ENCODE measurements at regions of chr4 and their contacts with region 1.

Region 1: DNA sequence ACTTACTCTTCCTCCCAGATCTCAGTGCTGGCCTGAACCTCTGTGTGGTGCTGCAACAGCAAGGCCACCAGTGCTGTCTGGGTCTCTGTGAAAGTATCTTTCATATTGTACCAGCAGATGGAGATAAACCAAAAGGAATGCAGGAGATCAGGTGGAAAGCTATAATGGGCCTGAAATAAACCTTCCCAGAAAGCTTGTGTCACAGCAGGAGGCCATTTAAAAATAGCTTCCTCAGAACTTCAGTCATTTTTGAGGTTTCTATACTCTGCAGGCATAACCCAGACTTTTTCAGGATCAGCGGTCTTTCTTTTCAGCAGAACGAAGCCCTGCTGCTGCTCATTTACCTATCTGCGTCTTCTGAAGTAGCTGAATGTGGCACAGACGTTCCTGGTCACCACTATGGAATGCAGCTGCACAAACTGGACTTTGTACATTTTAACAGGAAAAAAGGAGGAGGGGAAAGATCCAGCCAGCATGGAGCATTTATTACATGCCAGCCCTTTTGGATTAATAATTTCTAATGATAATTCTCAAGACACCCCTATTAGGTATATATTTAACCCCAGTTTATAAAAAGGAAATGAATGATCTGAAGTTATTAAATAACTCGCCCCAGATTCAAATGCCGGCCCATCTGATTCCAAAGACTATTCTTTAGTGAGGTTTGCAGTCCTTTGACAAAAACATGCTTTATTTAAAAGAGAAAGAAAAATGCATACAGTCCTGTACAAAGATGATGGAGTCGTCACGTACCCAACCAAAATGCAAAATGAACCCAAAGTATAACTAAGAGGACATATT is 119.7 kb downstream of the NFKB1 start:
- DNase-seq: peak; percentile 43 to 68
- H3K4me3 ChIP-seq: peak overlapping the region; percentile 25; the same call in 1 of the 2 replicates
- H3K27ac ChIP-seq: peak overlapping the region; percentile 12
- H3K4me1 ChIP-seq: peaks cover 12% of the 10 kb centered on the region
- H3K27me3 ChIP-seq: no peaks in the 10 kb centered on the region
- CTCF ChIP-seq: peak; percentile 72

Region 2: GRCh38 chr4:102439236-102439614 is 181.7 kb before region 1 on chr4:
- CTCF ChIA-PET with region 1: no interaction called
- POLR2A ChIA-PET with region 1: no interaction called
- intact Hi-C with region 1: loop called (anchors 10 kb)
- DNase-seq: peak; percentile 3 to 51
- H3K4me3 ChIP-seq: no peak overlapping the region
- H3K27ac ChIP-seq: peak overlapping the region; percentile 26; the same call in 1 of the 2 replicates
- H3K4me1 ChIP-seq: peaks cover 18% of the 10 kb centered on the region
- H3K27me3 ChIP-seq: no peaks in the 10 kb centered on the region
- CTCF ChIP-seq: no peak

Region 3: DNA sequence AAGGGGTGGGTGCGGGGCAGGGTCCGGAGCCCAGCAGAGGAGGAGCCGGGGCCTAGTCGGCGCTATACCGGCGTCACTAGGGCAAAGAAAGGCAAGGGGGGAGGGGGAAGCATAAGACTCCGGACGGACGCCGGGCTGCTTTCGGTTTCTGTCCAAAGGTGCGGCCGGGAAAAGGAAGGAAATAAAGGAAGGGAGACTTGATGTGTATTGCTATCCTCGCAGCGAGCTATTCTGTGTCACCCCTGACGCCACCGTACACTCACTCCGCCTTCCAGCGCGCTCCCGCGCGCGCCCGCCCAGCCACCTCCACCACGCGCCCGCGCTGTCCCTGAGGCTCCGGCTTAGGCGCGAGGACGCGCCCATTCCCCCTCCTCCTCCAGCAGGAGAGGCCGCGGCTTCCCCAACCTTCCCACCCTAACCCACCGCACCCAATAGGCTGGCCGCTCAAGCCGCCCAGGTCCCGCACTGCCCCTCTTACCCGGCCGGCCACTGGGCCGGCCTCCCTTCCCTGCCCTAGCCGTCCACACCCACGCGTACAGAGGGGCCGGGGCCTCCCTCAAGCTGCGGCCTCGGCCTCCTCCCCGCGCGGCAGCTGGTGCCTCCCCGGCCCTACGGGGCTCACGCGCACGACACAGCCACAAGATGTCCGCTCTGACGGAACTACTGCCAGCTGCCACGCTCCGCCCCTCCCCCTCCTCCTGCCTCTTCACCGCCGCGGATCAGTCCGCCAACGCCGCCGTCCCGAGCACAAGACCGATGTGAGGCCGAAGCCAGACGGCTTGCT is 206.2 kb after region 1 on chr4 and contains the start of gene UBE2D3:
- CTCF ChIA-PET with region 1: interaction called, 4 read pairs
- POLR2A ChIA-PET with region 1: no interaction called
- intact Hi-C with region 1: loop called (anchors 5 kb)
- DNase-seq: peak; percentile 75 to 85
- H3K4me3 ChIP-seq: peak within 1 kb of the TSS; percentile 95
- H3K27ac ChIP-seq: peak within 1 kb of the TSS; percentile 99
- H3K4me1 ChIP-seq: peaks cover 38% of the 10 kb centered on the region
- H3K27me3 ChIP-seq: no peaks in the 10 kb centered on the region
- CTCF ChIP-seq: no peak
- total RNA-seq, gene UBE2D3: 154 and 183 TPM in 2 replicates

Region 4: GRCh38 chr4:103008875-103009729 is 388.2 kb after region 1 on chr4:
- CTCF ChIA-PET with region 1: no interaction called
- POLR2A ChIA-PET with region 1: no interaction called
- intact Hi-C with region 1: loop called (anchors 1 kb)
- DNase-seq: peak in 1 of 2 experiments; percentile 52
- H3K4me3 ChIP-seq: no peak overlapping the region
- H3K27ac ChIP-seq: no peak overlapping the region
- H3K4me1 ChIP-seq: peaks cover 10% of the 10 kb centered on the region
- H3K27me3 ChIP-seq: no peaks in the 10 kb centered on the region
- CTCF ChIP-seq: peak; percentile 64

Region 5: GRCh38 chr4:103091601-103092223 is 470.8 kb after region 1 on chr4:
- CTCF ChIA-PET with region 1: no interaction called
- POLR2A ChIA-PET with region 1: no interaction called
- intact Hi-C with region 1: loop called (anchors 5 kb)
- DNase-seq: peak; percentile 17 to 57
- H3K4me3 ChIP-seq: no peak overlapping the region
- H3K27ac ChIP-seq: no peak overlapping the region
- H3K4me1 ChIP-seq: no peaks in the 10 kb centered on the region
- H3K27me3 ChIP-seq: no peaks in the 10 kb centered on the region
- CTCF ChIP-seq: peak; percentile 72

Measured in PC-9 (cell line).